ENCODE measurements at regions of chr20 and their contacts with region 1.

Region 1: GRCh38 chr20:675453-676314 is at the start of gene SCRT2:
- DNase-seq: peak in 1 of 2 experiments; percentile 91
- H3K4me3 ChIP-seq: peak within 1 kb of the TSS; percentile 48 to 92 (median 58)
- H3K27ac ChIP-seq: no peak within 1 kb of the TSS
- H3K4me1 ChIP-seq: peaks cover 0 to 13% (median 7%) of the 10 kb centered on the region in 4 experiments; a peak in 5 of 7 replicates
- H3K27me3 ChIP-seq: peaks cover 3 to 38% (median 32%) of the 10 kb centered on the region in 4 experiments
- CTCF ChIP-seq: no peak; a peak in 1 of 4 replicates
- EP300 ChIP-seq: no peak
- POLR2A ChIP-seq: no peak
- RAD21 ChIP-seq: no peak
- total RNA-seq, gene SCRT2: 0.27 and 0.34 TPM in 2 replicates

Region 2: GRCh38 chr20:528923-529604 is 146.6 kb before region 1 on chr20:
- CTCF ChIA-PET with region 1: no interaction called
- POLR2A ChIA-PET with region 1: no interaction called
- DNase-seq: no peak
- H3K4me3 ChIP-seq: no peak overlapping the region
- H3K27ac ChIP-seq: no peak overlapping the region
- H3K4me1 ChIP-seq: peaks cover 0 to 3% (median 0%) of the 10 kb centered on the region in 4 experiments; a peak in 2 of 7 replicates
- H3K27me3 ChIP-seq: no peaks in the 10 kb centered on the region
- CTCF ChIP-seq: no peak
- EP300 ChIP-seq: no peak
- POLR2A ChIP-seq: no peak; a peak in 1 of 3 replicates
- RAD21 ChIP-seq: no peak

Region 3: GRCh38 chr20:728248-728944 is 52.7 kb after region 1 on chr20:
- CTCF ChIA-PET with region 1: interaction called, 10 read pairs
- POLR2A ChIA-PET with region 1: interaction called, 3 read pairs
- DNase-seq: peak; percentile 62 to 91
- H3K4me3 ChIP-seq: peak overlapping the region; percentile 34 to 68 (median 42)
- H3K27ac ChIP-seq: no peak overlapping the region
- H3K4me1 ChIP-seq: peaks cover 0 to 4% (median 2%) of the 10 kb centered on the region in 4 experiments; a peak in 4 of 7 replicates
- H3K27me3 ChIP-seq: peaks cover 0 to 12% (median 9%) of the 10 kb centered on the region in 4 experiments; a peak in 6 of 7 replicates
- CTCF ChIP-seq: peak; percentile 71 to 88 (median 78)
- EP300 ChIP-seq: no peak
- POLR2A ChIP-seq: no peak
- RAD21 ChIP-seq: peak; percentile 78 to 87

Measured in H1 (cell line).